CD8-positive, alpha-beta T cell (primary cell): ENCODE measurements at regions of chr14 and their contacts with region 1.

Region 1: DNA sequence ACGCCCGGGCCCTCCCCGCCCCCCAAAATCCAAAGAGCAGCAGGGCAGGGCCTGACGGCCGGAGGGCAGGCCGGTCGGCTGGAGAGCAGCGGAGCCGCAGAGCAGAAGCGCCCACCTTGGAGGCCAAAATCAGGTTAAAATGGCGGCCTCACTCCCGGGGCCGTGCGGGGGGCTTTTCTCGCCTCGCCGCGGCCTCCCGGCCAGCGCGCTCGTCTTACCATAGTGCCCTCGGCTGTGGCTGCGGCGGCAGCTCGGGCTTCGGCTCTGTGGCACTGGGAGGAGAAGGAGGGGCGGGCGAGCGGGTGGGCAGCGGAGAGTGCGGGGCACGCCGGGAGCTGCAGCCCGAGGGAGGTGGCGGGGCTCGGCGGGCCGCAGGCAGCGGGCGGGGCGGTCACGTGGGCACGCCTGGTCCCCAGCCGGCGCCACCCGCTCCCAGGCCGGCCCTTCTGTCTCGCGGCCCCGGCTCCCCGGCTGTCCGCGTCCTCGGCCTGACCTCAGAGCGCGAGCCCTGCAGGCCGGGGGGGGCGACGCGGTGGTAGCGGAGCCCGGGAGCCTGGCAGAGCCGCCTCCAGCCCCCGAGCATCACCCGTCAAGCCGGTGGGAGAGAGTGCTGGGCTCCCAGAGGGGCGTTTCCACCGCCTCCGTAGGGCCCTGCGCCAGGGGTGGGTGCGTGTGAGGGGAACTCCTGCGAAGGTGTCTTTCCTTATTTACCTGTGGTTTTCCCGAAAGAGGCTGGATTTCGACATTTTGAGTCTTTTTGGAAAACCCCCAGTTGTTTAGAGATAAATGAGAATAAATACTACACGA is at the start of gene CFL2:
- DNase-seq: peak; percentile 35 to 92 (median 72)
- ATAC-seq: peak; percentile 86
- H3K4me3 ChIP-seq: peak within 1 kb of the TSS; percentile 72 to 78
- H3K4me3 Mint-ChIP-seq: peak within 1 kb of the TSS; percentile 92
- H3K27ac ChIP-seq: peak within 1 kb of the TSS; percentile 45 to 51
- H3K27ac Mint-ChIP-seq: peak within 1 kb of the TSS; percentile 90
- H3K4me1 ChIP-seq: peaks cover 13% of the 10 kb centered on the region
- H3K4me1 Mint-ChIP-seq: peaks cover 33% of the 10 kb centered on the region
- H3K27me3 ChIP-seq: no peaks in the 10 kb centered on the region
- H3K27me3 Mint-ChIP-seq: peaks cover 2% of the 10 kb centered on the region
- CTCF ChIP-seq: no peak
- total RNA-seq, gene CFL2: 35.1 to 35.4 TPM

Region 2: DNA sequence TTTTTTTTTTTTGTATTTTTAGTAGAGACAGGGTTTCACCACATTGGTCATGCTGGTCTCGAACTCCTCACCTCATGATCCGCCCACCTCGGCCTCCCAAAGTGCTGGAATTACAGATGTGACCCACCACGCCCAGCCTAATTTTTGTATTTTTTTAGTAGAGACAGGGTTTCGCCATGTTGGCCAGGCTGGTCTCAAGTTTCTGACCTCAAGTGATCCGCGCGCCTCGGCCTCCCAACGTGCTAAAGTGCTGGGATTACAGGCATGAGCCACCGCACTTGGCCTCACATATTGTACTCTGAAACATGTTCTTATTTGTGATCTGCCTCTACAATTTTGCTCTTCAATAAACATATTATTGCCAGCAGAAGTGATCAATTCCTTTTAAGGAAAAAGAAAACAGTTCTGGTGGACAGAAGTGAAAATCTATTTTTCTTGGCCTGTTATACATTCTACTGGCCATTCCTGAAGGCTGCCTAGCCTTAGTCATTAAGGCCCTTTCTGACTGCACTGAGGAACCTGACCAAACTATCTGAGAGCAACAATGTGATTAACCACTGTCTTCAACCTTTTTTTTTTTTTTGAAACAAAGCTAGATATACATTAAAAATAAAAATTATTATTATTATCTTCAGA is 120.7 kb before region 1 on chr14:
- CTCF ChIA-PET with region 1: no interaction called
- POLR2A ChIA-PET with region 1: no interaction called
- intact Hi-C with region 1: no loop called
- DNase-seq: no peak
- ATAC-seq: no peak
- H3K4me3 ChIP-seq: no peak overlapping the region
- H3K4me3 Mint-ChIP-seq: no peak overlapping the region
- H3K27ac ChIP-seq: no peak overlapping the region
- H3K27ac Mint-ChIP-seq: no peak overlapping the region
- H3K4me1 ChIP-seq: no peaks in the 10 kb centered on the region
- H3K4me1 Mint-ChIP-seq: peaks cover 9% of the 10 kb centered on the region
- H3K27me3 ChIP-seq: no peaks in the 10 kb centered on the region
- H3K27me3 Mint-ChIP-seq: no peaks in the 10 kb centered on the region
- CTCF ChIP-seq: no peak

Region 3: DNA sequence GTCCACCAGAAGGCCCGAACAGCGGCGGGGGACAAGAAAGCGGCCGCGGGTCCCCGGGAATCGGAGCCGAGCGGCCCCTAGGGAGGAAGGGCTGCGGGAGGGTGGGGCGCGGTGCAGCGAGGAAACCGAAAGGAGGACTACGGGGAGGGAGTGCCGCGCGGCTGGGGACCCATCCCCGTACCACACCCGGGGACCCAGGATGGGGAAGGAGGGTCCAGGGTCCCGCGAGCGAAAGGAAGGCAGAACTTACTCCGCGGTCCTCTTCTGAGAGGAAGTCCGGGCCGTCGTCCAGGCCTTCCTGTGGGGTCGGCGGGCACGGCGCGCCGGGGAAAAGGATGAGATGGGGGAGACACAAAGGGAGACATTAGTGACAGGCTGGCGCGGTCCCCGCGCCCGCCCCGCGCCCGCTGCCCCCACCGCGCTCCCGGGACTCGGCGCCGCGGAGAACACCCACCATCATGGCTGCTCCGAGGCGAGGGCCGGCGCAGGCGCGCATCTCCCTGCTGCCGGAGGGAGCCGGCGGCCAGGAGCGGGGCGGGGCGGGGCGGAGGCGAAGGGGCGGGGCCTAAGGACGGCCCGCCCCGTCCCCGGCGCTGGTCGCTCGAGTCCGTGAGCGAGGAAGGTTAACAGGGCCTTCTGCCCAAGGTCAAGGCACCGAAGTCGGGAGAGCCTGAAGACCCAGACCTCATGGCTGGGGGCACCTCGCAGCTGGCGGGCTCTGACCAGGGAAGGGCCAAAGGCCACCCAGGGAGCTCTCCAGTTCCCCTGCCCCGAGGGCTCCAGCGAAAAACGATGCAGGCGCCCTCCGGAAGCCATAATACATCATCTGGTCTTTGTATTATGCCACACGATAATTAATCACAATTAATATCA is 84.6 kb before region 1 on chr14 and contains the start of gene SNX6:
- CTCF ChIA-PET with region 1: no interaction called
- POLR2A ChIA-PET with region 1: no interaction called
- intact Hi-C with region 1: loop called (anchors 1 to 5 kb)
- DNase-seq: peak; percentile 70 to 92 (median 83)
- ATAC-seq: peak; percentile 96
- H3K4me3 ChIP-seq: peak within 1 kb of the TSS; percentile 95 to 100
- H3K4me3 Mint-ChIP-seq: peak within 1 kb of the TSS; percentile 94
- H3K27ac ChIP-seq: peak within 1 kb of the TSS; percentile 91 to 96
- H3K27ac Mint-ChIP-seq: peak within 1 kb of the TSS; percentile 93
- H3K4me1 ChIP-seq: peaks cover 20% of the 10 kb centered on the region
- H3K4me1 Mint-ChIP-seq: peaks cover 37% of the 10 kb centered on the region
- H3K27me3 ChIP-seq: no peaks in the 10 kb centered on the region
- H3K27me3 Mint-ChIP-seq: peaks cover 4% of the 10 kb centered on the region
- CTCF ChIP-seq: no peak
- total RNA-seq, gene SNX6: 51.2 to 53.5 TPM

Region 4: DNA sequence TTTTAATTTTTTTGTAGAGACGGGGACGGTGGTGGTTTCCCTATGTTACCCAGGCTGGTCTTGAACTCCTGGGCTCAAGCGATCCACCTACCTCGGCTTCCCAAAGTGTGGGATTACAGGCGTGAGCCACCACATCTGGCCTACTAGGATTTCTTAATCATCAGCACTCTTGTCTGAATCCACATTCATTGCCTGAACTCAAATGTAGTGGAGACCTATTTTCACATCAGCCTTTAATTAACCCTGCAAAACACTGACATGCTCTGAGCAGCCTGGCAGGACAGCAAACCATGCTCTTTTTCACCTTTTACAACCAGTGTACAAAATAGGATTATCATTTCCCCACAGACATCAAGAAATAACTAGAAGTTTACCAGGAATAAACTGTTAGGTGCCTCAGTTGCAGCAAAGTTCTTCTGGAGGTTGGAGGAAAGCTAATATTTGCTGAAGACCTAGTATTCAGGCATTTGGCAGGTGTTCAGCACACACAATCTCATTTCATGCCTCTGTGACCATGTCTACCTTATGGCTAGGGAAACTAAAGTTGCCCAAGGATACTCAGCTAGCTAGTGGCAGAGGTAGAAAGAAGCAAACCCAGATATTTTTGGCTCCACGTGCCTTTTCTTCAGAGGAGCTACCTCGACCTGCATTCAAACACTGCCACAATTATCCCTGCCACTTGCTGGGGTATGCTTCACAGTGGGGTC is 37.9 kb before region 1 on chr14:
- CTCF ChIA-PET with region 1: interaction called, 50 read pairs
- POLR2A ChIA-PET with region 1: no interaction called
- intact Hi-C with region 1: no loop called
- DNase-seq: no peak
- ATAC-seq: no peak
- H3K4me3 ChIP-seq: no peak overlapping the region
- H3K4me3 Mint-ChIP-seq: no peak overlapping the region
- H3K27ac ChIP-seq: no peak overlapping the region
- H3K27ac Mint-ChIP-seq: no peak overlapping the region
- H3K4me1 ChIP-seq: no peaks in the 10 kb centered on the region
- H3K4me1 Mint-ChIP-seq: no peaks in the 10 kb centered on the region
- H3K27me3 ChIP-seq: no peaks in the 10 kb centered on the region
- H3K27me3 Mint-ChIP-seq: no peaks in the 10 kb centered on the region
- CTCF ChIP-seq: no peak